ENCODE measurements at regions of chr7 and their contacts with region 1.

Region 1: DNA sequence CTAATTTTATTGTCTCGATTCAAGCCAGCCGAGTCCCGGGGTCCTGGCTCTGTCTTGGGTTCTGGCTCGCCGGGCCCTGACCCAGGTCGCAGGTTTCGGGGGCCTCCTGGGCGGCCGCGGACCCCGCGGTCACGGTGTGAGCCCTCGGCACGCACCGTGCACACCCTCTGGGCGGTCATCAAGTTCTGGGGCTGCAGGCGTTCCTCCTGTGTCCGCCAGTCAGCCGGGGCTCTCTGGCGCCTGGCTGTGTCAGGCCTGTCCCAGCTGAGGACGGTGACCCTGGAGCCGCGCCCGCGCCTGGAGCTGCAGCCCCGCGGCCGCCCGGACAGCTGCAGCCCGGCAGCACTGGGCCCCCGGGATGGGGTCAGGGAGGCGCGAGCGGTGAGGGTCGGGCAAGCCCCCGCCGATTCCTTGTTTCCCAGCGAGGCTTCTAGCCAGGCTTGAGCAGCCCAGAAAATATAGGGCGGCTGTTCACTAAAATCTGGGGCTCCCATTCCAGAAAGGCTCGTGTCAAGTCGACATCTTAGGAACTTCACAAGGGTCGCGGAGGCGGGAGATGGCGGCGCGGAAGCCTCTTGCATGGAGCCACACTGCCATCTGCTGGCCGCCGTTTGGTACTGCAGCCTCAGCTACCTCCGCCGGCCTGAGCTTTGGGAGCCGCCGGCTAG is 4.2 kb upstream of the HOXA7 start:
- DNase-seq: peak; percentile 72 to 92 (median 80)
- ATAC-seq: peak; percentile 81
- H3K4me3 ChIP-seq: peak overlapping the region; percentile 60
- H3K4me3 Mint-ChIP-seq: peak overlapping the region; percentile 87
- H3K27ac ChIP-seq: no peak overlapping the region
- H3K27ac Mint-ChIP-seq: peak overlapping the region; percentile 42
- H3K4me1 ChIP-seq: peaks cover 57% of the 10 kb centered on the region
- H3K4me1 Mint-ChIP-seq: peaks cover 46% of the 10 kb centered on the region
- H3K27me3 ChIP-seq: peaks cover 82 to 94% of the 10 kb centered on the region in 2 experiments
- H3K27me3 Mint-ChIP-seq: peaks cover 93% of the 10 kb centered on the region
- CTCF ChIP-seq: peak; percentile 100

Region 2: DNA sequence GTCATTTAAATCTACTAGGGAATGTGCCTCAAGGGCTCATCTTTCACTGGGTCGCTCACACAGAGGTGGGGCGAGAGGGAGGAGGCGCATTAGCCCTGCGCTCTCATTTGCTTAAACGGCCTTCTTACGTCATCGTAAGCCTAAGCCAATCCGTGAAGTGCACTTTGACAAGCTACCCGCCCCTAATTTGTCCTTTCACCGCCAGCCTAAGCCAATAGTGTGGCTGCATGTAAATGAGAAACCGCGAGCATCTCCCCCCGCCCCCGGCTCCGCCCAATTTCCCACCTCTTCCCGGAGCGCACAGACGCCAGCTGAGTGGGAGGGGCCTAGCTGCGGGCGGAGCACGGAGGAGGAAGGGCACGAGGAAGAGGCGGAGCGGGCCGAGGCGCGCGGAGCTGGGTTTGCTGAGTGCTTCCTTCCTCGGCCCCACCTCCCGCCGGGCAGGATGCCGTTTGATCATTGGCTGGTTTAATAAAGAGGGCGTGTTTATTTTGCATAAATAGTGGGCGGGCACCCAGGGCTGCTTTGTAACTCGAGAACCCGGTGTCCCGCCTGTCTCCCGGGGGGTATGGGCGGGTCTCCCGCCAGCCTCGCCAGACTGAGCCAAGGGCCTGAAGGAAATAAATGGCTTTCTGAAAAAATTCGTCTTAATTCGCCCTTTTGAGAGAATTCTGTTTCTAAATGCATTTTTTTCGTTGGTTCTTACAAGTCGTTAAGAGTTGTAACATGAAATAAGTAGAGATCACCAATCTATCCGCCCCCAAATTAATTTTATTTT is 1298.2 kb before region 1 on chr7:
- CTCF ChIA-PET with region 1: no interaction called
- POLR2A ChIA-PET with region 1: interaction called, 4 read pairs
- intact Hi-C with region 1: loop called in 1 of 2 experiments (anchors 1 kb)
- DNase-seq: peak; percentile 26 to 87 (median 51)
- ATAC-seq: peak; percentile 86
- H3K4me3 ChIP-seq: peak overlapping the region; percentile 13
- H3K4me3 Mint-ChIP-seq: peak overlapping the region; percentile 55
- H3K27ac ChIP-seq: no peak overlapping the region
- H3K27ac Mint-ChIP-seq: peak overlapping the region; percentile 78
- H3K4me1 ChIP-seq: peaks cover 20% of the 10 kb centered on the region
- H3K4me1 Mint-ChIP-seq: peaks cover 24% of the 10 kb centered on the region
- H3K27me3 ChIP-seq: peaks cover 66 to 98% of the 10 kb centered on the region in 2 experiments
- H3K27me3 Mint-ChIP-seq: peaks cover 30% of the 10 kb centered on the region
- CTCF ChIP-seq: no peak

Region 3: GRCh38 chr7:26078437-26079336 is 1082.0 kb before region 1 on chr7:
- CTCF ChIA-PET with region 1: no interaction called
- POLR2A ChIA-PET with region 1: no interaction called
- intact Hi-C with region 1: loop called in 1 of 2 experiments (anchors 10 kb)
- DNase-seq: peak; percentile 69 to 89 (median 80)
- ATAC-seq: peak; percentile 100
- H3K4me3 ChIP-seq: no peak overlapping the region
- H3K4me3 Mint-ChIP-seq: no peak overlapping the region
- H3K27ac ChIP-seq: no peak overlapping the region
- H3K27ac Mint-ChIP-seq: no peak overlapping the region
- H3K4me1 ChIP-seq: peaks cover 4% of the 10 kb centered on the region
- H3K4me1 Mint-ChIP-seq: peaks cover 11% of the 10 kb centered on the region
- H3K27me3 ChIP-seq: peaks cover 5 to 26% of the 10 kb centered on the region in 2 experiments
- H3K27me3 Mint-ChIP-seq: peaks cover 48% of the 10 kb centered on the region
- CTCF ChIP-seq: peak; percentile 80

Region 4: DNA sequence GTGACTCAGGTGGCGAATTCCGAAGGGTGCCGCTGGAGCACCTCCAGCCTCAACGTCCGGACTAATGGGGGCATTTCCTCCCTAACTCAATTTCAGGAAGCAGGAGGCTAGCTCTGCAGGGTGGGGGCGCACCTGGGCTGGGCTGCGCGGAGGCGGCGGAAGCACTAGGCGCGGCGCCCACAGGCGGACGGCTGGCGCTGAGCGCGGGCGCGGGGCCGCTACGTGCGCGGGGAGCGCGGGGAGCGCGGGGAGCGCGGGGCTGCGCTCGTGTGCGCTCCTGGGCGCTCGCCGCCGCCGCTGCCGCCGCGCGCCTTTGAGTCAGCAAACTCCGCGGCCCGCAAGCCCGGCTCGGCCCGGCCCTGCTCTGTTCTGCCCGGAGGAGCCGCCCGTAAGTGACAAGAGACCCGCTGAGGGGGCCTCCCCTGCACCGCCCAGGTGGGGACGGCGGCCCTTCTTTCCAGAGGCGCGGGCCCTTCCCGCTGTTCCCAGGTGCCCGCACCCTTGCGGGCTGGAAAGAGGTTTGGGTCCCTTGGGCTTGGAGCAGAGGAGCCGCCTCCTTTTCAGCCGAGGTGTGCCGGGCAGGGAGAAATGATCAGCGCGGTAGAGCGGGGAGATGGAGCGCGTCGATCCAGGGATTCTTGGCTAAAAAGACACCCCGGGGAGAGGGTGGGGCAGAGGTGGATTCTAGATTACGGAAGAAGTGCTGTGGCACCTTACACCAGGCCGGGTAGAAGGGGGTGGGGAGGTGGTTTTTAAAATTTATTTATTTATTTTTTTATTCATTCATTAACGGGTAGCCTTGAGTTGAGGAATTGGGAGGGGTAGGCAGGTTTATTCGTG is 868.8 kb before region 1 on chr7 and contains the start of gene SNX10:
- CTCF ChIA-PET with region 1: no interaction called
- POLR2A ChIA-PET with region 1: no interaction called
- intact Hi-C with region 1: loop called in 1 of 2 experiments (anchors 10 kb)
- DNase-seq: peak; percentile 40 to 91 (median 64)
- ATAC-seq: peak; percentile 82
- H3K4me3 ChIP-seq: peak within 1 kb of the TSS; percentile 89
- H3K4me3 Mint-ChIP-seq: peak within 1 kb of the TSS; percentile 95
- H3K27ac ChIP-seq: peak within 1 kb of the TSS; percentile 46 to 53
- H3K27ac Mint-ChIP-seq: peak within 1 kb of the TSS; percentile 72
- H3K4me1 ChIP-seq: peaks cover 38% of the 10 kb centered on the region
- H3K4me1 Mint-ChIP-seq: peaks cover 37% of the 10 kb centered on the region
- H3K27me3 ChIP-seq: no peaks in the 10 kb centered on the region
- H3K27me3 Mint-ChIP-seq: no peaks in the 10 kb centered on the region
- CTCF ChIP-seq: no peak
- total RNA-seq, gene SNX10: 4.6 to 5.8 TPM

Region 5: GRCh38 chr7:26667500-26668133 is 493.1 kb before region 1 on chr7:
- CTCF ChIA-PET with region 1: interaction called, 5 read pairs
- POLR2A ChIA-PET with region 1: no interaction called
- intact Hi-C with region 1: loop called in 1 of 2 experiments (anchors 5 kb)
- DNase-seq: peak in 12 of 14 experiments; percentile 15 to 82 (median 30)
- ATAC-seq: peak; percentile 61
- H3K4me3 ChIP-seq: no peak overlapping the region
- H3K4me3 Mint-ChIP-seq: no peak overlapping the region
- H3K27ac ChIP-seq: no peak overlapping the region
- H3K27ac Mint-ChIP-seq: no peak overlapping the region
- H3K4me1 ChIP-seq: no peaks in the 10 kb centered on the region
- H3K4me1 Mint-ChIP-seq: peaks cover 19% of the 10 kb centered on the region
- H3K27me3 ChIP-seq: no peaks in the 10 kb centered on the region
- H3K27me3 Mint-ChIP-seq: peaks cover 15% of the 10 kb centered on the region
- CTCF ChIP-seq: peak; percentile 75

Region 6: GRCh38 chr7:26853788-26854393 is 306.8 kb before region 1 on chr7:
- CTCF ChIA-PET with region 1: interaction called, 10 read pairs
- POLR2A ChIA-PET with region 1: no interaction called
- intact Hi-C with region 1: loop called (anchors 1 to 2 kb)
- DNase-seq: peak in 3 of 14 experiments; percentile 46 to 53 (median 50)
- ATAC-seq: no peak
- H3K4me3 ChIP-seq: no peak overlapping the region
- H3K4me3 Mint-ChIP-seq: no peak overlapping the region
- H3K27ac ChIP-seq: no peak overlapping the region
- H3K27ac Mint-ChIP-seq: no peak overlapping the region
- H3K4me1 ChIP-seq: peaks cover 3% of the 10 kb centered on the region
- H3K4me1 Mint-ChIP-seq: no peaks in the 10 kb centered on the region
- H3K27me3 ChIP-seq: peaks cover 13 to 47% of the 10 kb centered on the region in 2 experiments
- H3K27me3 Mint-ChIP-seq: peaks cover 47% of the 10 kb centered on the region
- CTCF ChIP-seq: peak; percentile 53

Region 7: GRCh38 chr7:27179503-27180430 is 19.1 kb after region 1 on chr7:
- CTCF ChIA-PET with region 1: interaction called, 13 read pairs
- POLR2A ChIA-PET with region 1: interaction called, 3 read pairs
- intact Hi-C with region 1: no loop called
- DNase-seq: peak in 11 of 14 experiments; percentile 41 to 85 (median 56)
- ATAC-seq: peak; percentile 78
- H3K4me3 ChIP-seq: no peak overlapping the region
- H3K4me3 Mint-ChIP-seq: peak overlapping the region; percentile 57
- H3K27ac ChIP-seq: no peak overlapping the region
- H3K27ac Mint-ChIP-seq: no peak overlapping the region
- H3K4me1 ChIP-seq: peaks cover 28% of the 10 kb centered on the region
- H3K4me1 Mint-ChIP-seq: peaks cover 18% of the 10 kb centered on the region
- H3K27me3 ChIP-seq: peaks cover 73 to 90% of the 10 kb centered on the region in 2 experiments
- H3K27me3 Mint-ChIP-seq: peaks cover 96% of the 10 kb centered on the region
- CTCF ChIP-seq: peak; percentile 90

Measured in CD4-positive, alpha-beta T cell (primary cell).